ENCODE measurements at regions of chr6 and their contacts with region 1.

Region 1: DNA sequence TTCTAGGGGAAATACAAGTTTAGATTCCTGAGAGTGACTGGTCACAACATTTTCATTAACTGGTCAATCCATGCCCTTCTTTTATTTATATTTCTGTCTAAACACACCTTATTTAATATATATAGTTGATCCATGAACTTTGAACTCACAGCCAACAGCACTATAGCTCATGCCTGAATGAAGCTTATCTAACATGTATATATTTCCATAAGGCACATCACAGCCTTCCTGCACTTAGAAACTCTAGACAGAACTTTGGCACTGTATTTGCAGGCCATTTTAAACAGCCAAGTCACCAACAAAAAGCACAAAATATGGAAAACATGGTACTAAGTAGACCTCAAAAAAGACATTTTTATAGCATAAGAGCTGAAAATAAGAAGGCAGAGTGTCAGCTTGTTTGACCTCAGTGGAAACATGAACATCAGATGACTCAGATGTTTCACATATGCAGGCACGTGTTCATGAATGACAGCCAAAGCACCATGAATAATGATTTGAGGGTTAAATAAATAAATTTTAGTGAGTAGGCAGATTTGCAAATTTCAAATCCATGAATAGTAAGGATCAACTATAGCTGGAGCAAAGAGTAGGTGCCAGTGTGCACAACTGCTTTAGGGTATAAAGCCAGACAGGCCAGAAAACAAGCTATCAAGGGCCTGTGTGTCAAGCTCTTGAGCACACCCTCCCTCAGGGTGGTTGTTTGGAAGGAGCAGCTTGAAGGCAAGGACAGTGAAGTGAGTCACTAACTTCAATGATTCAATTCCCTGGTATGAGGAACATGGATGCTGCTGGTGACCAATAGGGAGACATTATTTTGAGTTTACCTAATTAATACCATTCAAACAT is 88.9 kb upstream of the NT5E start:
- DNase-seq: no peak
- ATAC-seq: peak in 3 of 8 donors; percentile 61 to 89 (median 69)
- H3K4me3 ChIP-seq: no peak overlapping the region
- H3K27ac ChIP-seq: no peak overlapping the region
- H3K4me1 ChIP-seq: no peaks in the 10 kb centered on the region
- H3K27me3 ChIP-seq: no peaks in the 10 kb centered on the region
- CTCF ChIP-seq: no peak

Region 2: GRCh38 chr6:85287654-85288053 is 73.4 kb before region 1 on chr6:
- intact Hi-C with region 1: no loop called
- DNase-seq: no peak
- ATAC-seq: no peak
- H3K4me3 ChIP-seq: no peak overlapping the region
- H3K27ac ChIP-seq: no peak overlapping the region
- H3K4me1 ChIP-seq: no peaks in the 10 kb centered on the region
- H3K27me3 ChIP-seq: no peaks in the 10 kb centered on the region
- CTCF ChIP-seq: no peak

Region 3: GRCh38 chr6:85482905-85483700 is 122.1 kb after region 1 on chr6:
- intact Hi-C with region 1: loop called in 2 of 10 experiments (anchors 1 to 2 kb)
- DNase-seq: peak; percentile 67 to 79
- ATAC-seq: peak; percentile 72 to 93 (median 88)
- H3K4me3 ChIP-seq: peak overlapping the region in 1 of 10 donors; percentile 15
- H3K27ac ChIP-seq: peak overlapping the region in 4 of 10 donors; percentile 26 to 57 (median 40)
- H3K4me1 ChIP-seq: peaks cover 0 to 14% (median 11%) of the 10 kb centered on the region in 9 donors
- H3K27me3 ChIP-seq: no peaks in the 10 kb centered on the region
- CTCF ChIP-seq: peak; percentile 98 to 100 (median 99)

Region 4: GRCh38 chr6:85726206-85726605 is 365.2 kb after region 1 on chr6:
- intact Hi-C with region 1: no loop called
- DNase-seq: no peak
- ATAC-seq: no peak
- H3K4me3 ChIP-seq: no peak overlapping the region
- H3K27ac ChIP-seq: no peak overlapping the region
- H3K4me1 ChIP-seq: no peaks in the 10 kb centered on the region
- H3K27me3 ChIP-seq: no peaks in the 10 kb centered on the region
- CTCF ChIP-seq: no peak

Measured in heart right ventricle (tissue), 16 donors.